Left cardiac atrium (tissue), 4 donors: ENCODE measurements at regions of chr17 and their contacts with region 1.

Region 1: DNA sequence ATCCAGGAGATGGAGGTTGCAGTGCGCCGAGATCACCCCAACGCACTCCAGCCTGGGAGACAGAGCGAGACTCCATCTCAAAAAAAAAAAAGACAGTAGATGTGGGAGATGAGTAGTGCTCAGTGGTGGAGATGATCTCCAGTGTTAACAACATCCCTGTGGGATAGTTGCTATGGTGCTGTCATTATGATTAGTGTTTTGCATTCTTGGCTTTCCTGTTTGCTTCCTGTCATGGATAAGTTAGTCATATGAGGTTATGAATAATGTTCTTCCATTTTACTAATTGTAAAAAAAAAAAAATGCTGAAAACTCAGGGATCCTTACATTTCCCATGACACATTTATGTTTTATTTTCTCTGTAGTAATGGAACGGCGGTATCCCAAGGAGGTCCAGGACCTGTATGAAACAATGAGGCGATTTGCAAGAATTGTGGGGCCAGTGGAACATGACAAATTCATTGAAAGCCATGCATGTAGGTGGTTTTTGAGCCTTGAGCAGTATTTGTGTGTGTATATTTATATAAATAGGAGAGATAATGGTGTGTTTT is 24.5 kb upstream of the DUSP14 start:
- DNase-seq: no peak
- ATAC-seq: no peak

Region 2: DNA sequence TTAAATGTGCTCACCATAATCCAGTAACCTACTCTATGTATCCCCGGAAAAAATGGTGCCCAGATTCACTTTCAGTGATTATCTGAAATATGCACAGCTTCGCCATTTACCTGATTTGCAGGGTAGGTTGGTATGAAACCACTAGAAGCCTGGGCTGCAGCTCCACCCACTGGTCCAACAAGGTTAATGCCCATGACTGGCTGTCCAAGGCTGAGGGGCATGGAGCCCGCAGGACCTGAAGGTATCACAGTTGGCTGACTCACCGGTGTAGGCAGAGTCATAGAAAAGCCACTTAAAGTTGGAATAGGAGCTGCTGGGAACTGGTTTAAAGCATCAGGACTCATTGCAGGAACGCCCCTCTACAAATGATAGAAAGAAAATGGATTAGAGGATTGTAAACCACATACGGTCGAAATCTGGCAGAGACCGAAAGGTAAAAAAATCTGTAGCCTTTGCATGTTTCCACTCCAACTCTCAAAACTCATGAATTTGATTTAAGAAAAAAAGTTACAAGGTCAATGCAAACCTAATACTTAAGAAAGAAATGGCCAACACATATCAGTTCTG is 105.5 kb after region 1 on chr17:
- intact Hi-C with region 1: loop called in 1 of 2 experiments (anchors 10 kb)
- DNase-seq: peak; percentile 36
- ATAC-seq: peak; percentile 68 to 76